ENCODE measurements at regions of chr15 and their contacts with region 1.

Region 1: DNA sequence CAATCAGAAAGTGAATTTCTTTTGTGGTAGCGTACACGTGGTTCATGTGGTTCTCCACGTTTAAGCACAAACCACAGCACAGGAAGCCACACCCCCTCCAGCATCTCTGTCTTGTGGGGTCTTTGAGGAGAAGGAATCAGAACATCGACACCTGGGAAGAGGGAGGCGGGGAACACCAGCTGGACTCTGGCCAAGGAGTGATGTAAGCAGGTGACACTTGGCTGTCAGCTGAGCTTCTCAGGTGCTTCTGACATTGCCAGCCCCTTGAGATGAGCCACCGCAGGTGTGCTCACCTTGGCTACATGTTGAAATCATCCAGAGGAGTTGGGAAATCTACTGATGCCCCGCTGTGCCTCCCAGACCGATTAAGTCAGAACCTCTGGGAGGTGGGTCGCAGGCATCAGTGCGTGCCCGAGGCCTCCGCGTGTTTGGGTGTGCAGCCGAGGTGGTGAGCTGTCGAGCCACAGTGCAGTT is 85.0 kb downstream of the FAM81A start:
- DNase-seq: peak in 8 of 9 donors; percentile 41 to 81 (median 74)
- ATAC-seq: peak; percentile 92
- H3K4me3 ChIP-seq: no peak overlapping the region
- H3K4me3 Mint-ChIP-seq: peak overlapping the region; percentile 26 to 82 (median 74)
- H3K27ac ChIP-seq: no peak overlapping the region
- H3K27ac Mint-ChIP-seq: peak overlapping the region; percentile 13 to 90 (median 81)
- H3K4me1 ChIP-seq: peaks cover 12 to 26% of the 10 kb centered on the region in 2 donors
- H3K4me1 Mint-ChIP-seq: peaks cover 15 to 58% (median 40%) of the 10 kb centered on the region in 7 donors
- H3K27me3 ChIP-seq: no peaks in the 10 kb centered on the region
- H3K27me3 Mint-ChIP-seq: peaks cover 0 to 26% (median 0%) of the 10 kb centered on the region in 5 donors

Region 2: DNA sequence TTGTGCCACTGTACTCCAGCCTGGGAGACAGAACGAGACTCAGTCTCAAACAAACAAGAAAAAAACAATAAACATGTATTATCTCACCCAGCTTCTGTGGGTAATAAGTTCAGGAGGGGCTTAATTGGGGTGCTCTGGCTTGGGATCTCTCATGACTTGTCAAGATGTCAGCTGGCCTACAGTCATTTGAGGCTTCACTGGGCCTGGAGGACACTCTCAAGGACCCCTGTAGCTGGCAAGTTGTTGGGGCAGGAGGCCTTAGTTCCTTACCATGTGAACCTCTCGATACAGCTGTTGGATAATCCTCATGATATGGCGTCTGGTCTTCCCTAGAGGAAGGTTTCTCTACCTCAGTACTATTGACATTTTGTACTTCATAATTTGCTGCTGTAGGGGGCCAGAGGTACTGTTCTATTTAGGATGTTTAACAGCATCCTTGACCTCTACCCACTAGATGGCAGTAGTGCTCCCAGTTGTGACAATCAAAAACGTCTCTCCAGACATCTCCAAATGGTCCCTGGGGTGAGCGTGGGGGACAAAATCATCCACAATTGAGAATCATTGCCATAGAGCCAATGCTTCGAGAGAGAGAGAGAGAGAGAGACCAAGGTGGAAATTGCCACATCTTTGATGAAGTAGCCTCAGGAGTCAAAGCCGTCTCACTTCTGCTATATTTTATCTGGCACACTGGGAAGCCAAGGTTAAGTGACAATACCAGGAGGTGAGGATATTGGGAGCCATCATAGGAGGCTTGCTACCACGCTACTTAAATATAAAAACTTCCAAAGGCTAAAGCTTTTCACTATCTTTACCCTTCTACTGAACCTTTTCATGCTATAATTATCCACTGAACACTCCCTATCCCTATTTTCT is 565.7 kb before region 1 on chr15:
- CTCF ChIA-PET with region 1: interaction called, 5 read pairs
- POLR2A ChIA-PET with region 1: no interaction called
- intact Hi-C with region 1: loop called (anchors 1 to 10 kb)
- DNase-seq: peak in 8 of 9 donors; percentile 37 to 69 (median 63)
- ATAC-seq: peak; percentile 99
- H3K4me3 ChIP-seq: no peak overlapping the region
- H3K4me3 Mint-ChIP-seq: peak overlapping the region in 1 of 10 donors; percentile 39
- H3K27ac ChIP-seq: no peak overlapping the region
- H3K27ac Mint-ChIP-seq: no peak overlapping the region
- H3K4me1 ChIP-seq: no peaks in the 10 kb centered on the region
- H3K4me1 Mint-ChIP-seq: peaks cover 0 to 14% (median 8%) of the 10 kb centered on the region in 7 donors
- H3K27me3 ChIP-seq: peaks cover 0 to 3% of the 10 kb centered on the region in 2 donors
- H3K27me3 Mint-ChIP-seq: peaks cover 0 to 11% (median 0%) of the 10 kb centered on the region in 5 donors

Region 3: DNA sequence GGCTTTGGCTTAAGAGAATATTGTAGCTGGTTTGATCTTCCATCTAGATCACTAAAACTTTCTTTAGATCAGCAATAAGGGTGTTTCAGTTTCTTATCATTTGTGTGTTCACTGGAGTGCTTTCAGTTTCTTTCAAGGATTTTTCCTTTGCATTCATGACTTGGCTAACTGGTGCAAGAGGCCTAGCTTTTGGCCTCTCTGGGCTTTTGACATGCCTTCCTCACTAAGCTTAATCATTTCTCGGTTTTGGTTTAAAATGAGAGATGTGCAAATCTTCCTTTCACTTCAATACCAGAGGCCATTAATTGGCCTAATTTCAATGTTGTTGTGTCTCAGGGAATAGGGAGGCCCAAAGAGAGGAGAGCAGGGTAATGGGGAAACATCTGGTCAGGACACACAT is 448.4 kb before region 1 on chr15:
- CTCF ChIA-PET with region 1: interaction called, 11 read pairs
- POLR2A ChIA-PET with region 1: interaction called, 3 read pairs
- intact Hi-C with region 1: no loop called
- DNase-seq: no peak
- ATAC-seq: no peak
- H3K4me3 ChIP-seq: no peak overlapping the region
- H3K4me3 Mint-ChIP-seq: peak overlapping the region in 1 of 10 donors; percentile 6
- H3K27ac ChIP-seq: no peak overlapping the region
- H3K27ac Mint-ChIP-seq: peak overlapping the region in 7 of 9 donors; percentile 3 to 82 (median 36)
- H3K4me1 ChIP-seq: no peaks in the 10 kb centered on the region
- H3K4me1 Mint-ChIP-seq: peaks cover 0 to 15% (median 0%) of the 10 kb centered on the region in 7 donors
- H3K27me3 ChIP-seq: no peaks in the 10 kb centered on the region
- H3K27me3 Mint-ChIP-seq: no peaks in the 10 kb centered on the region

Measured in naive thymus-derived CD4-positive, alpha-beta T cell (primary cell).